ENCODE measurements at regions of chr9 and their contacts with region 1.

Region 1: DNA sequence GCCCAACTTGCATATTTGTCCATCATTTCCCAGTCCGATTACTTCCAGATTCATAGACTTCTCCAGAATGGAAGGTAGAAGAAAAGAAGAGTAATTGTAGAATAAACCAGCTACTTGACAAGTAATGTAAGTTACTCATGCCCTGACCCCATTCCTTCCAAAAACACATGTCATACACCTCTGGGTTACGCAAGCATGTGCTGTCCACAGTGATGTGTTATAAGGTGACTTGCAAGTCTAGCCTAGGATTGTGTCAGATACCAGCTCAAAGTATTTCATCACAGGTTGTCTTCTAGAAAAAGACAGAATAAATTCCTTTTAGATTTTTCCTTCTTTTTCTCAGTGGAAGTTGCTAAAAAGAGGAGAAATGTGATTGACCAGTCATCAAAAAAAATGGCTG is 8.1 kb upstream of the TLR4 start:
- DNase-seq: no peak
- H3K4me3 ChIP-seq: no peak overlapping the region
- H3K27ac ChIP-seq: no peak overlapping the region
- H3K4me1 ChIP-seq: no peaks in the 10 kb centered on the region
- H3K27me3 ChIP-seq: no peaks in the 10 kb centered on the region
- CTCF ChIP-seq: no peak
- POLR2A ChIP-seq: no peak

Region 2: GRCh38 chr9:117636681-117637080 is 59.5 kb before region 1 on chr9:
- intact Hi-C with region 1: loop called (anchors 10 kb)
- DNase-seq: no peak
- H3K4me3 ChIP-seq: no peak overlapping the region
- H3K27ac ChIP-seq: no peak overlapping the region
- H3K4me1 ChIP-seq: no peaks in the 10 kb centered on the region
- H3K27me3 ChIP-seq: no peaks in the 10 kb centered on the region
- CTCF ChIP-seq: no peak
- POLR2A ChIP-seq: no peak

Measured in thyroid gland (tissue), 4 donors.